Activated CD4-positive, alpha-beta T cell treated with anti-CD3 and anti-CD28 coated beads for 36 hours (primary cell): ENCODE measurements at regions of chr4 and their contacts with region 1.

Region 1: GRCh38 chr4:145618932-145619638 is at the start of gene MMAA:
- DNase-seq: peak; percentile 98
- ATAC-seq: peak; percentile 84
- H3K4me3 Mint-ChIP-seq: peak within 1 kb of the TSS; percentile 95
- H3K27ac Mint-ChIP-seq: peak within 1 kb of the TSS; percentile 97
- H3K4me1 Mint-ChIP-seq: peaks cover 49% of the 10 kb centered on the region
- H3K27me3 Mint-ChIP-seq: no peaks in the 10 kb centered on the region
- total RNA-seq, gene MMAA: 19.2 to 20.8 TPM

Region 2: DNA sequence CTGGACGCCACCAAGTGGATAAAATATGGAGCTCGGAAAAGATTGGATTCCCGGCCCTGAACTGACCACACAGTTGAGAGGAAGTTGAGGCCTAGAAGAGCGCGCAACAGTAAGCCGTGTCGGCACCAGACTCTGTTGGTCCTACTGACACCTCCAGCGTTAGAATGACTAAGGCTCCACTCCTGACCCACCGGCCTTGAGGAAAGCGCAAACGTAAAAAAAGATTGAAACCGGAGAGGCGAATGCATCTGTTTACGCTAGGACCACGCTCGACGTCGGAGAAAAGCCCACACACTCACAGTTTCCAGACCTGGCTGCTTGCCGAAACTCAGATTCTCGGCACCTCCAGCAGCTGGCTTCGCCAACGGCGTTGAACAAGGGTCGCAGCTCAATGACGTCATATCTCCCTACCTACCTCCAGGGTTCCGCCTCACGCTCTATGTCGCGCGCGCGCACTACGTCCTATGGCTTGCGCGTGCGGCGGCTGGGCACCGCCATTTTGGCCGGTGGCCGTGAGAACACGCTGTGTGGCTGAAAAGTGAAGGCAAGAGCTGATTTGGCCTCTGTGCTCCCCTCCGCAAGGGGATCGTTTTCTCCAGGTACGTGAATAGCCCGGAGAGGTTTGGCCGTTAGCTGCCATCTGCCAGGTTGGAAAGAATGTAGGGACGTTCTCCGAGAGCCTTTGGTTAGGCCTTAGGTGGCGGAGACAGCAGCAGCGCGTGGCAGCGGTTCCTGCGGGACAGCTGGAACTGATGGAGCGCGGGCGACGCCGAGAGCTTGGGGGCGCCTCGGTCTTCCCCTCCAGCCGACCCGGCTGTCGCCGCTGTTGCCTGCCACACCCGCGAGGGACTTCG is 521.0 kb before region 1 on chr4 and contains the starts of genes ABCE1 and ANAPC10:
- CTCF ChIA-PET with region 1: no interaction called
- POLR2A ChIA-PET with region 1: no interaction called
- intact Hi-C with region 1: loop called (anchors 1 kb)
- DNase-seq: peak; percentile 98
- ATAC-seq: peak; percentile 92
- H3K4me3 Mint-ChIP-seq: peak within 1 kb of the TSS; percentile 97
- H3K27ac Mint-ChIP-seq: peak within 1 kb of the TSS; percentile 99
- H3K4me1 Mint-ChIP-seq: peaks cover 22% of the 10 kb centered on the region
- H3K27me3 Mint-ChIP-seq: no peaks in the 10 kb centered on the region
- total RNA-seq, gene ABCE1: 148 to 172 TPM
- total RNA-seq, gene ANAPC10: 27.7 to 31.5 TPM

Region 3: GRCh38 chr4:145481164-145481941 is 137.7 kb before region 1 on chr4 and contains the start of gene SMAD1:
- CTCF ChIA-PET with region 1: interaction called, 4 read pairs
- POLR2A ChIA-PET with region 1: interaction called, 3 read pairs
- intact Hi-C with region 1: loop called (anchors 1 to 2 kb)
- DNase-seq: peak; percentile 73
- ATAC-seq: peak; percentile 54
- H3K4me3 Mint-ChIP-seq: peak within 1 kb of the TSS; percentile 73
- H3K27ac Mint-ChIP-seq: peak within 1 kb of the TSS; percentile 75
- H3K4me1 Mint-ChIP-seq: peaks cover 19% of the 10 kb centered on the region
- H3K27me3 Mint-ChIP-seq: peaks cover 12% of the 10 kb centered on the region
- total RNA-seq, gene SMAD1: 5.3 to 10.7 TPM

Region 4: DNA sequence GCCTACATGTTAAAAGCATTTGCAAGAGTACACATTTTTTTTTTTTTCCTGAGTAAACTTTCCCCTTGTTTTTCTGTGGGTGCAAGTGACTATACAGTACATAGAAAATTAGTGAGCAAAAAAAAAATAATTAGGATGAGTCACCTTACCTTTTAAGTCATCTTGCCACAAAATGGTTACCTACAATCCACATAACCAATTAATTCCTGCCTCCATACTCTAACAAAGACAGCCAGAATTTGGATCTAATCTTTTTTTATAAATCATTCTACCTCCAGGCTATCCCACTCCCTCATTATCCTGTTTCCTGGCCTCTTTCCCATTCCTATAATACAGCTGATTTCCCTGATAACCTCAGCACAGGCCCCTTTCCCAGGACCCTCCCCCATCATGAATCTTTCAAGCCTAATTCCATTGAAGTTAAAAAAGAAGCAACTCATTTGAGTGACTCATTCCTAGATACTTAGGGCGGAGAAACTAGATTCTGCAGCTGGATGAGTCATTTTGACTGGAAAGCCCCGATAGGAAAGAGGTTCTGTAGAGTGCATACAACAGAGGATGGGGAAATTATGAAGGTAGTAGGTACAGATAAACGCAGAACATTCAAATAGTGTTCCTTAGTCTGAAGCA is 189.1 kb after region 1 on chr4:
- CTCF ChIA-PET with region 1: no interaction called
- POLR2A ChIA-PET with region 1: interaction called, 6 read pairs
- intact Hi-C with region 1: loop called (anchors 1 kb)
- DNase-seq: peak; percentile 65
- ATAC-seq: peak; percentile 82
- H3K4me3 Mint-ChIP-seq: peak overlapping the region; percentile 39
- H3K27ac Mint-ChIP-seq: peak overlapping the region; percentile 95
- H3K4me1 Mint-ChIP-seq: peaks cover 59% of the 10 kb centered on the region
- H3K27me3 Mint-ChIP-seq: no peaks in the 10 kb centered on the region

Region 5: GRCh38 chr4:146175541-146176453 is 556.7 kb after region 1 on chr4 and contains the start of gene LSM6:
- CTCF ChIA-PET with region 1: no interaction called
- POLR2A ChIA-PET with region 1: no interaction called
- intact Hi-C with region 1: loop called (anchors 2 to 10 kb)
- DNase-seq: peak; percentile 91
- ATAC-seq: peak; percentile 94
- H3K4me3 Mint-ChIP-seq: peak within 1 kb of the TSS; percentile 82
- H3K27ac Mint-ChIP-seq: peak within 1 kb of the TSS; percentile 85
- H3K4me1 Mint-ChIP-seq: peaks cover 49% of the 10 kb centered on the region
- H3K27me3 Mint-ChIP-seq: no peaks in the 10 kb centered on the region
- total RNA-seq, gene LSM6: 64.9 to 66.9 TPM

Region 6: GRCh38 chr4:146522098-146522868 is 903.2 kb after region 1 on chr4:
- CTCF ChIA-PET with region 1: no interaction called
- POLR2A ChIA-PET with region 1: no interaction called
- intact Hi-C with region 1: loop called in 1 of 2 experiments (anchors 5 kb)
- DNase-seq: peak; percentile 91
- ATAC-seq: peak; percentile 77
- H3K4me3 Mint-ChIP-seq: no peak overlapping the region
- H3K27ac Mint-ChIP-seq: no peak overlapping the region
- H3K4me1 Mint-ChIP-seq: peaks cover 27% of the 10 kb centered on the region
- H3K27me3 Mint-ChIP-seq: no peaks in the 10 kb centered on the region